Left cardiac atrium (tissue), 4 donors: ENCODE measurements at regions of chr10 and their contacts with region 1.

Region 1: GRCh38 chr10:35119378-35119777 is 7.3 kb upstream of the CREM start:
- DNase-seq: no peak
- ATAC-seq: no peak

Region 2: DNA sequence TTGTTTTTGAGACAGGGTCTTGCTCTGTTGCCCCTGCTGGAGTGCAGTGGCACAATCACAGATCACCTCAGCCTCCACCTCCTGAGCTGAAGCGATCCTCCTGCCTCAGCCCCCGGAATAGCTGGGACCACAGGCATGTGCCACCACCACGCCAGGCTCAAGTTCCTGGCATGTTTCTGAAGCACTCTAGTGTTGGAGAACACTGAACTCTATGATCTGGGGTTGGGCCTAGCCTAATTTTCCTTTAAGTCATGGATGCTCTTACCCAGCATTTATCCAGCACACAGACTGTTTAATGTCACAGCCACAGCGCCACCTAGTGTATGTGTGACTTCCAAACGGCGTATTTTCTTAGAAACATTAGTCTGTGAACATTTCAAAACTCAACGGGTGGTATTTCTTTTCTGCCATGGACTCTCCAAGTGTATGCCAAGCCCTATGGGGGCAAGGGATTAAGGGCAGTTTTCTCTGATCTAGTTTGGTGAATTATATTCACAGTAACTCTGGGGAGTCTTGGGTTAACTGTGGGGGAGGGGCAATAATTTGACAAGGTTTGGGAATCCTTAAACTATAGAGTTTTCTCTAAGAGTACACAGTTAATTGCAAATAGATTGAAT is 99.1 kb after region 1 on chr10:
- intact Hi-C with region 1: loop called (anchors 2 to 5 kb)
- DNase-seq: peak; percentile 89
- ATAC-seq: peak; percentile 78 to 79